WTC11 (cell line): ENCODE measurements at regions of chr1 and their contacts with region 1.

Region 1: GRCh38 chr1:114282751-114283403 is 129.2 kb upstream of the SYT6 start:
- DNase-seq: peak; percentile 91
- ATAC-seq: peak; percentile 100
- H3K4me3 Mint-ChIP-seq: no peak overlapping the region
- H3K27ac Mint-ChIP-seq: no peak overlapping the region
- H3K4me1 Mint-ChIP-seq: peaks cover 14% of the 10 kb centered on the region
- H3K27me3 Mint-ChIP-seq: peaks cover 2% of the 10 kb centered on the region; the same call in 1 of the 2 replicates
- CTCF ChIP-seq: peak; percentile 75

Region 2: GRCh38 chr1:113871597-113872113 is 411.2 kb before region 1 on chr1 and contains the start of gene PTPN22:
- CTCF ChIA-PET with region 1: no interaction called
- POLR2A ChIA-PET with region 1: no interaction called
- DNase-seq: no peak
- ATAC-seq: peak; percentile 39; the same call in 1 of the 2 replicates
- H3K4me3 Mint-ChIP-seq: no peak within 1 kb of the TSS
- H3K27ac Mint-ChIP-seq: no peak within 1 kb of the TSS
- H3K4me1 Mint-ChIP-seq: 0 out of 2 replicates have a peak, but pooled peaks cover 2% of the 10 kb centered on the region
- H3K27me3 Mint-ChIP-seq: no peaks in the 10 kb centered on the region
- CTCF ChIP-seq: no peak
- total RNA-seq, gene PTPN22: 0.11 to 0.18 TPM in 2 of 3 replicates, not detected in the other

Region 3: GRCh38 chr1:114108751-114109255 is 174.1 kb before region 1 on chr1:
- CTCF ChIA-PET with region 1: interaction called, 15 read pairs
- POLR2A ChIA-PET with region 1: no interaction called
- DNase-seq: no peak
- ATAC-seq: no peak
- H3K4me3 Mint-ChIP-seq: no peak overlapping the region
- H3K27ac Mint-ChIP-seq: no peak overlapping the region
- H3K4me1 Mint-ChIP-seq: peaks cover 73% of the 10 kb centered on the region
- H3K27me3 Mint-ChIP-seq: no peaks in the 10 kb centered on the region
- CTCF ChIP-seq: no peak

Region 4: DNA sequence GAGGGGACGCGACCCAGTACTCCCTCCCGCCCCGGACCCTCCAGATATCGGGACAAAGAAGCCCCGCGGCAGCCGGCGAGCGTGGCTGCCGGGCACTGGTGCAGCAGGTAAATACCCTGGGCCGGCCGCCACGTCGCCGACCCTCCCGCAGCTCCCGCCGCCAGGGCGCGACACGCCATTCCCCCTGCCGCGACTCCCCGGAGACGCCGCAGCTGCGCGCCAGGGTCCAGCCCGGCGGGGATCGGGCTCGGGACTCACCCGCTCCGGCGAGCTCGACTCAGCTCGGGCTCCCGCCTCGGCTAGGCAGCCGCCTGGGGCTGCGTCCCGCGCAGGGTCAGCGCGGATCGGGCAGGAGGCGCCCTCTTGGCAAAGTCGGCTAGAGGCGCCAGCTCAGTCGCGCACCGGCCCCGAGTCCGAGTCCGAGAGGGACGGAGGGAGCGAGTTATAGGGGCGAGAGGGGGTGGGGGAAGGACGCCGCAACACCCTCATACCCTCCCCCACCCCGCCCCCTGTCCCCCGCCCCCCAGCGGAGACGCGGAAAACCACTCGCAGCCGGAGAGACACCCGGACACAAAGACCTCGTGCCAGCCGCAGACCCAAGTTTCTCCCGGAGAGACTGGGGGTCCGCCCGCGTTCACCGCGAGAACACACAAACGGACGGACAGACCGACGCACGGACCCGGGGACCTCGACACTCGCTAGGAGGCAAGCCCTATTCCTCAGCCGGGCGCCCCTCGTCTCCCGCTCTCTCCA is 130.2 kb before region 1 on chr1:
- CTCF ChIA-PET with region 1: interaction called, 37 read pairs
- POLR2A ChIA-PET with region 1: no interaction called
- DNase-seq: peak; percentile 57
- ATAC-seq: peak; percentile 15
- H3K4me3 Mint-ChIP-seq: peak overlapping the region; percentile 80
- H3K27ac Mint-ChIP-seq: no peak overlapping the region
- H3K4me1 Mint-ChIP-seq: peaks cover 76% of the 10 kb centered on the region
- H3K27me3 Mint-ChIP-seq: peaks cover 27% of the 10 kb centered on the region
- CTCF ChIP-seq: no peak

Region 5: DNA sequence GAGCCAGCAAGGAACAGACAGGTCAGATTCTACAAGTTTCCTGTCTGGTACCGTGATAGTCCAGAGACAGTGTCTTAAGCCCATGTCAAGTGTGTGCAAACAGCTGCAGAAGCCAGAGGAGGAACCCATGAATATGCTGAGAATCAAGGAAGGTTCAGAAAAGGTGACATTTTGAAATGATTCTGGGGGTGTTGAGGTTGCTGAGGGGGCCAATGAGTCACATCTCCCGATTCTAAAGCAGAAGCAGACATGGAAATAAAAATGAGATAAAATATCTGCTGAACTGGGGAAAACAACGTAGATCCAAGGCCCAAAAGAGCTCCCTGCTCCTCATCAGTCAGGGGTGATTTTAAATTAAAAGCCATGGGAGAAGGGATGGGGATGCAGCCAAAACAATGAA is 113.4 kb before region 1 on chr1:
- CTCF ChIA-PET with region 1: no interaction called
- POLR2A ChIA-PET with region 1: no interaction called
- DNase-seq: no peak
- ATAC-seq: no peak
- H3K4me3 Mint-ChIP-seq: no peak overlapping the region
- H3K27ac Mint-ChIP-seq: no peak overlapping the region
- H3K4me1 Mint-ChIP-seq: no peaks in the 10 kb centered on the region; the same call in 1 of the 2 replicates
- H3K27me3 Mint-ChIP-seq: peaks cover 22% of the 10 kb centered on the region
- CTCF ChIP-seq: no peak

Region 6: DNA sequence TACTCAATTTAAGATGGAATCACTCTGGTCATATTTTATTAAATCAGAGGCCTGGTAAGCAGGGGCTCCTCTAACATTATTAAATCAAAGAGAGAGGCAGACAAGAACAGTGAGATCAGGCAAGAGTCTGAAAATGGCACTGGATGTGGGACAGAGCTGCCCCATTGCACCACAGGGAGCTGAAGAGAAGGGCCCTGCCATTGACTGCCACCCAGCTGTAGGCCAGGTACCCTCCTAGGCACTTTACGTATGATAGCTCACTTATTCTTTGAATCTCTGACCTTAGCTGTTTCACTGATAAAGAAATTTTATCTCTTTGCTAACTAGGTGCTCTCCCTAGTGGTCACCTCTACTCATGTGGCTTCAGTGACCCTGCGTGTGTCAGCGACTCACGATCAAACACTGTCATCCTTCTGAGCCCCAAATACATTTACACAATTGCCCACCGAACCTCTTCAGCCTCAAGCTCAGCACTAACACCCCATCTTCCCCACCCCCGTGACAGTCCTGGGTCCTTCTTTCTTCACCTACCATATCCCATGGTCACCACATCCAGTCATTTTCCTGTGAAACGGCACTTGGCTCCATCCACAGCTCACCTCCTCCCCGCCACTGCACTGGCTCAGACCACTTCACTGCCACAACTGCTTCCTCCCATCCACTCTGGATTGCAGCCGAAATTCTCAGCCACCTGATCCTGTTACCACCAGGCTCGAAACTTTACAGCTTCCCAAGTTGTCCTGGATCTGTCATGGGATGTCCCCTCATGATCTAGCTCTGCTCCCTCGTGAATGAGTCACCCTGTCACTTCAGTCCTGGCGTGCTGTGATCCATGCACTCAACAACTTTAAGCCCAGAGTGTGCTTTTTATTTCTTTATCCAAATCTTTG is 31.9 kb before region 1 on chr1:
- CTCF ChIA-PET with region 1: interaction called, 11 read pairs
- POLR2A ChIA-PET with region 1: interaction called, 3 read pairs
- DNase-seq: no peak
- ATAC-seq: no peak
- H3K4me3 Mint-ChIP-seq: no peak overlapping the region
- H3K27ac Mint-ChIP-seq: no peak overlapping the region
- H3K4me1 Mint-ChIP-seq: peaks cover 5% of the 10 kb centered on the region
- H3K27me3 Mint-ChIP-seq: peaks cover 21% of the 10 kb centered on the region
- CTCF ChIP-seq: no peak

Region 7: DNA sequence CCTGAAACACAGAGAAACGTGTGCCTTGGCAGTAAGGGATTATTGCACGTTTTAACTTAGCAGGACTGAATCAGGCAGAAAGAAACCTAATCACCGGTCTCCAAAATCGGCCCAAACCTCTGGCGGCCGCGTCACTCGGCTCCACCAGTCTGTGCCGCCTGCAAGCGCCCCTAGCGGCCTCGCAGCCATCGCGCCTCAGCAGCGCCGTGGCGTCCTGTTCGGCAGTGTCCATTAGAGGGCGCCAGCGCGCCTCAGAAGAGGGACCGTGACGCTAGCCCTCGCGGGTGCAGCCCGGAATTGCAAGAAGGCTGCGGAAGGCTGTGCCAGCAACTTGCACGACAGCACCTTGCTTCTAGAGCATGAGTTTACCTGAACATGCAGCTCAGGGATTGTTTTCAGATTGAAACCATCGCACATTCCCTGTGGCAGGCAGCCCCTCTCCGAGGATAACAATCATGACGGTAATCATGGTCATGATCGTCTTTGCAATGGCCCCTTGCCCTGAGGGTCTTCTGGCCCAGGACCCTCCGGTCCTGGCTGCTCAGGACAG is 63.7 kb after region 1 on chr1:
- CTCF ChIA-PET with region 1: interaction called, 15 read pairs
- POLR2A ChIA-PET with region 1: no interaction called
- DNase-seq: peak; percentile 98
- ATAC-seq: peak; percentile 92
- H3K4me3 Mint-ChIP-seq: peak overlapping the region; percentile 88
- H3K27ac Mint-ChIP-seq: peak overlapping the region; percentile 94
- H3K4me1 Mint-ChIP-seq: peaks cover 10% of the 10 kb centered on the region
- H3K27me3 Mint-ChIP-seq: peaks cover 17% of the 10 kb centered on the region
- CTCF ChIP-seq: peak; percentile 99

Region 8: DNA sequence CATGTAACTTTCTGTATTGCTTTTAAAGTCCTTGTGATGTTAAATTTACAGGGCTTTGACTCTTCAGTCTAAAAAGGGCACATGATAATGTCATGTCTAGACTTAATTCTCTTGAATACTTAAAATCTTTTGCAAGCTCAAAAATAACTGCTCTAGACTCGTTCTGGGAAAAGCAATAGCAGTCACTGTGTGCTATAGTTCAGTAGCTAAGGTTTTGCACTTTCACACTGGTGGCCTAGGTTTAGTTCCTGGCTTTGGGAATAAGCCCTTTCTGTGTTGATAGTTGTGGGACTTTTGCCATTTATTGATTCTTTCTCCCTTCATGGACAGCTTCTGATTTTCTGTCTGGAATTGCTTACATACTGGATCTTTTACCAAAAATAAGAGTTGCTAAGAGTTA is 76.9 kb after region 1 on chr1:
- CTCF ChIA-PET with region 1: no interaction called
- POLR2A ChIA-PET with region 1: no interaction called
- DNase-seq: no peak
- ATAC-seq: no peak
- H3K4me3 Mint-ChIP-seq: no peak overlapping the region
- H3K27ac Mint-ChIP-seq: no peak overlapping the region
- H3K4me1 Mint-ChIP-seq: no peaks in the 10 kb centered on the region
- H3K27me3 Mint-ChIP-seq: peaks cover 2% of the 10 kb centered on the region; the same call in 1 of the 2 replicates
- CTCF ChIP-seq: no peak